Caco-2 (cell line): ENCODE measurements at regions of chr7 and their contacts with region 1.

Region 1: DNA sequence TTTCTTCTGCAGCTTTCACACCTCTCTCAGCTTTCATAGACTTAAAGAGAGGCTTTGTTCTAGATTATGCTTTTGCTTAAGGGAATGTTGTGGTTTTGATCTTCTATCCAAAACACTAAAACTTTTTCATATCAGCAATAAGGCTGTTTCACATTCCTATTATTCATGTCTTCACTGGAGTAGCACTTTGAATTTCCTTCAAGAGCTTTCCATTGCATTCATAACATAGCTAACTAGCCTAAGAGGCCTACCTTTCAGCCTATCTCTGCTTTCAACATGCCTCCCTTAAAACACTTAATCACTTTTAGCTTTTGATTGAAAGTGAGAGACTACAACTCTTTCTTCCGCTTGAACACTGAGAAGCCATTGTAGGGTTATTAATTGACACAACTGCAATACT is 1117.0 kb upstream of the PHF14 start:
- DNase-seq: no peak
- H3K4me3 ChIP-seq: no peak overlapping the region
- H3K4me3 Mint-ChIP-seq: no peak overlapping the region
- H3K27ac Mint-ChIP-seq: no peak overlapping the region
- H3K4me1 ChIP-seq: no peaks in the 10 kb centered on the region
- H3K4me1 Mint-ChIP-seq: no peaks in the 10 kb centered on the region
- H3K27me3 ChIP-seq: no peaks in the 10 kb centered on the region
- H3K27me3 Mint-ChIP-seq: no peaks in the 10 kb centered on the region
- CTCF ChIP-seq: no peak

Region 2: DNA sequence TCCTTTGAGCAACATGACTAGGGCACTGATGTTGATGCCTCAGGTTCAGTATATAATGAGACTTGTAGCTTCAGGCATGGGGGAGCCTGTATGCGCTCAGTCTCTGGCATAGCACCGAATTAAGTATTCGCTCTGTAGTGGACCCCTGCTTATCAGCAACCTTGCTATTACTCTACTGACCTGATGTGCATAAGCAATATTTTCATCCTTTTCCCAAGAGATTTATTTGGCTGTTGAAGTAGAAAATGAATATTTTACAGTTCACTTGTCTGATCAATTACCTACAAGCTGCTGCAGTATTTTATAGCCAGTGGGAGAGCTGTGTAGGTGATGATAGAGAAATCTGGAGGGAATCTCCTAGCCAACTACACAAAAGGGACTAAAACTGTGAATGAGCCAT is 335.4 kb after region 1 on chr7:
- CTCF ChIA-PET with region 1: no interaction called
- POLR2A ChIA-PET with region 1: no interaction called
- intact Hi-C with region 1: no loop called
- DNase-seq: no peak
- H3K4me3 ChIP-seq: no peak overlapping the region
- H3K4me3 Mint-ChIP-seq: no peak overlapping the region
- H3K27ac Mint-ChIP-seq: no peak overlapping the region
- H3K4me1 ChIP-seq: 0 out of 2 replicates have a peak, but pooled peaks cover 10% of the 10 kb centered on the region
- H3K4me1 Mint-ChIP-seq: no peaks in the 10 kb centered on the region
- H3K27me3 ChIP-seq: no peaks in the 10 kb centered on the region
- H3K27me3 Mint-ChIP-seq: no peaks in the 10 kb centered on the region
- CTCF ChIP-seq: no peak

Region 3: GRCh38 chr7:11665357-11665756 is 1808.7 kb after region 1 on chr7:
- CTCF ChIA-PET with region 1: no interaction called
- POLR2A ChIA-PET with region 1: no interaction called
- intact Hi-C with region 1: loop called (anchors 5 kb)
- DNase-seq: no peak
- H3K4me3 ChIP-seq: no peak overlapping the region
- H3K4me3 Mint-ChIP-seq: no peak overlapping the region
- H3K27ac Mint-ChIP-seq: no peak overlapping the region
- H3K4me1 ChIP-seq: no peaks in the 10 kb centered on the region
- H3K4me1 Mint-ChIP-seq: no peaks in the 10 kb centered on the region
- H3K27me3 ChIP-seq: no peaks in the 10 kb centered on the region
- H3K27me3 Mint-ChIP-seq: no peaks in the 10 kb centered on the region
- CTCF ChIP-seq: no peak